Heart left ventricle (tissue), 16 donors: ENCODE measurements at regions of chr4 and their contacts with region 1.

Region 1: DNA sequence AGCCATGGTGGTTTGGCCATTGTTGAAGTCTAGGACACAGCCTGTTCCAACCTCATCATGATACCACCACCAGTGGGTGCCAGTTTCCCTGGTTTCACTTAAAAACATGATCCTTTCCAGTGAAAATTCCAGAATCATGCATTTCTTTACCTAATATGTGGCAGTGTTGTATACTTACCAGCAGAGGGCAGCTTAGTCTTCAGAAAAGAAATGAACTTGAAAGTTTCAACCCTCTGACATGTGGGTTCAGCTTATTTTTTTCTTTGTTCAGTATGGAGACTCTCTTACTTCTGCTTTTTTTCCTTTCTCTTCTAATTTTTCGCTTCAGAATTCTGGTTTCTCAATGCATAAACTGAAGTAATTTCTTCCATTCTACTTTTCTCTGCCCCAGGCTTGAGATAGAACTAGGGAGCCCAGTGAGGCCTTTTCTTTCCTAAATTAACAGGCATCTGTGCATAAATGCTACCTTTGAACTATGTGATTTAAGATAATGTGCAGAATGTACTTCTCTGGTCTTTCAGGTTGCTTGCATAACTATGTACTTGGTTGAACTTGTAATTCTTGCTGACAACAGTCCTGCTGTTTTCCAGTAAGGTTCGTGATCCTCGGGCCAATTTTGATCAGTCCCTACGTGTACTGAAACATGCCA is 10.7 kb downstream of the LIAS start:
- DNase-seq: no peak
- ATAC-seq: peak; percentile 47 to 84 (median 76)
- H3K4me3 ChIP-seq: peak overlapping the region in 1 of 12 donors; percentile 28
- H3K27ac ChIP-seq: peak overlapping the region in 6 of 12 donors; percentile 11 to 82 (median 22)
- H3K4me1 ChIP-seq: peaks cover 0 to 10% (median 0%) of the 10 kb centered on the region in 12 donors
- H3K27me3 ChIP-seq: no peaks in the 10 kb centered on the region
- CTCF ChIP-seq: peak; percentile 63 to 89 (median 80)
- POLR2A ChIP-seq: no peak

Region 2: GRCh38 chr4:39353478-39354253 is 115.9 kb before region 1 on chr4:
- intact Hi-C with region 1: no loop called
- DNase-seq: no peak
- ATAC-seq: peak; percentile 69 to 86 (median 77)
- H3K4me3 ChIP-seq: peak overlapping the region in 10 of 12 donors; percentile 17 to 55 (median 40)
- H3K27ac ChIP-seq: peak overlapping the region; percentile 38 to 96 (median 62)
- H3K4me1 ChIP-seq: peaks cover 0 to 48% (median 9%) of the 10 kb centered on the region in 12 donors
- H3K27me3 ChIP-seq: no peaks in the 10 kb centered on the region
- CTCF ChIP-seq: no peak
- POLR2A ChIP-seq: no peak

Region 3: GRCh38 chr4:39609454-39609931 is 139.9 kb after region 1 on chr4:
- intact Hi-C with region 1: no loop called
- DNase-seq: no peak
- ATAC-seq: no peak
- H3K4me3 ChIP-seq: no peak overlapping the region
- H3K27ac ChIP-seq: no peak overlapping the region
- H3K4me1 ChIP-seq: peaks cover 0 to 19% (median 0%) of the 10 kb centered on the region in 12 donors
- H3K27me3 ChIP-seq: no peaks in the 10 kb centered on the region
- CTCF ChIP-seq: no peak
- POLR2A ChIP-seq: no peak

Region 4: DNA sequence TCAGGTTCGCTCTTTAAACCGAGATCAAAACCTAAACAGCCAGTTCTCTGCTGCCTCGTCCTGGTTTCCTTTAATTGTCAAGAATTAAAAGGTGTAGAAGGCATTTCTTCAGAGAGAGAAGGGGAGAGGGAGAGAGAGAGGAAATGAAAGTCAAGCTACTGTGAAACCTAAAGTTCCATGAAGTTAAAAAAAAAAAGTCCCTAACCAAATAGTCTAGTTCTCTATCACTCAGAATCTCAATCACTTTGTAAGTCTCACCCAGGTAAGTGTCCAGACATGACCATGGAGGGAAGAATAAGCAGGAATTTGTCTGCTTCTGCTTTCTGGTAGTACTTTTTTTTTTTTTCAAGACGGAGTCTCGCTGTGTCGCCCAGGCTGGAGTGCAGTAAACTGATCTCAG is 187.9 kb after region 1 on chr4:
- intact Hi-C with region 1: loop called in 2 of 10 experiments (anchors 10 kb)
- DNase-seq: no peak
- ATAC-seq: no peak
- H3K4me3 ChIP-seq: no peak overlapping the region
- H3K27ac ChIP-seq: no peak overlapping the region
- H3K4me1 ChIP-seq: no peaks in the 10 kb centered on the region
- H3K27me3 ChIP-seq: no peaks in the 10 kb centered on the region
- CTCF ChIP-seq: no peak
- POLR2A ChIP-seq: no peak

Region 5: GRCh38 chr4:39792529-39792928 is 323.0 kb after region 1 on chr4:
- intact Hi-C with region 1: no loop called
- DNase-seq: no peak
- ATAC-seq: no peak
- H3K4me3 ChIP-seq: no peak overlapping the region
- H3K27ac ChIP-seq: no peak overlapping the region
- H3K4me1 ChIP-seq: no peaks in the 10 kb centered on the region
- H3K27me3 ChIP-seq: no peaks in the 10 kb centered on the region
- CTCF ChIP-seq: no peak
- POLR2A ChIP-seq: no peak

Region 6: DNA sequence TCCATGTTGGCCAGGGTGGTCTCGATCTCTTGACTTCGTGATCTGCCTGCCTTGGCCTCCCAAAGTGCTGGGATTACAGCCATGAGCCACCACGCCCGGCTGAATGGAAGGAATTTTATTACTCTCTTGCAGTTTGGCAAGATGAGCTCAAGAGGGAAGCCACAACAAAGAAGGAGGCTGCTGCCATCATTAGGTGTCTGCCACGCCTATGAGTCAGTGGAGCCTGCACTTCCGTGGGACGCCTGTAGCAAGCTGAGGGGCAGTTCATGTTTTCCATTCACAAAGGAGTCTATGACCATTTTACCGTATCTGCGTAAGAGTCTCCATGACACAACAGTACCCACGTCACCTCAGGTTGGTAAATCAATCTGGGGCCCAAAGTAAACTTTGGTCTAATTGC is 814.4 kb after region 1 on chr4:
- intact Hi-C with region 1: no loop called
- DNase-seq: no peak
- ATAC-seq: no peak
- H3K4me3 ChIP-seq: no peak overlapping the region
- H3K27ac ChIP-seq: no peak overlapping the region
- H3K4me1 ChIP-seq: peaks cover 0 to under 1% (median 0%) of the 10 kb centered on the region in 12 donors
- H3K27me3 ChIP-seq: no peaks in the 10 kb centered on the region
- CTCF ChIP-seq: no peak
- POLR2A ChIP-seq: no peak